Right lobe of liver (tissue), 6 donors: ENCODE measurements at regions of chr19 and their contacts with region 1.

Region 1: GRCh38 chr19:18214779-18215433 is 11.1 kb upstream of the RAB3A start:
- DNase-seq: no peak
- ATAC-seq: no peak
- H3K4me3 ChIP-seq: no peak overlapping the region
- H3K27ac ChIP-seq: no peak overlapping the region
- H3K4me1 ChIP-seq: no peaks in the 10 kb centered on the region
- H3K27me3 ChIP-seq: no peaks in the 10 kb centered on the region
- CTCF ChIP-seq: no peak
- POLR2A ChIP-seq: no peak

Region 2: GRCh38 chr19:18251587-18252369 is 36.9 kb after region 1 on chr19:
- intact Hi-C with region 1: loop called (anchors 5 kb)
- DNase-seq: peak; percentile 57 to 73 (median 69)
- ATAC-seq: peak; percentile 82 to 94 (median 92)
- H3K4me3 ChIP-seq: no peak overlapping the region
- H3K27ac ChIP-seq: no peak overlapping the region
- H3K4me1 ChIP-seq: no peaks in the 10 kb centered on the region
- H3K27me3 ChIP-seq: no peaks in the 10 kb centered on the region
- CTCF ChIP-seq: peak; percentile 88 to 97 (median 89)
- POLR2A ChIP-seq: no peak